ENCODE measurements at regions of chr9 and their contacts with region 1.

Region 1: DNA sequence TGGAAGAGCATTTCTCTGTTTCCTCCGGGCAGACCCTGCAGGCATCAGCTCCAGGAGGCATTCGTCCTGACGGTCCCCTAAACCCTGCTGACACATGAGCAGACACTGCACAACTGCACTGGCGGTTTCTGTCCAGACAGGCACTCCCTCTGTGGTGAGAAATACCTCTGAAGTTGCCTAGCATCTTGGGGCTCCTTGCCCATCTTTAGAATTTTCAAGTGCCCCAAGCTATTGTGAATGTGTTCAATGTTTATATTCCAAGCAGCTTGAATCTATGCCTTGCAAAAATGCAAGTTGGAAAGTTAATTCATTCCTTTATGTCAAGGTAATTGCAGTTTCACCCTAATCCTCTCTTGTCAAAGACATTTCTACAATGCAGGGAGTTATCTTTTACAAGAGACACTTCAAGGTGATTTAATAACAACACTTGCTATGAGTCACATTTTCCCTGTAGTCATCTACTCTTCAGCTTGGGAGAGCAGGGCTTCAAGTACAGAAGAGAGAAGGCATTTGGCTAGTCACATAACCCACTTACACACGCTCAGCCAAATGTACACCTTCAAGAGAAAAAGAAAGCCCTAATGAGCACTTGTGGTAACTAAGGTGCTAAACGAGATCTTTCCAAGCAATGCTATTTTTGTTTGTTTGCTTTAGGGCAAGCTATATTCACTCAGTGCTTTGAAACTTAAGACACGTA is 302.5 kb downstream of the MLLT3 start:
- DNase-seq: peak; percentile 48
- H3K4me3 Mint-ChIP-seq: no peak overlapping the region
- H3K27ac Mint-ChIP-seq: peak overlapping the region; percentile 86
- H3K4me1 Mint-ChIP-seq: peaks cover 98% of the 10 kb centered on the region
- H3K27me3 Mint-ChIP-seq: no peaks in the 10 kb centered on the region

Region 2: GRCh38 chr9:19517202-19517942 is 802.4 kb before region 1 on chr9:
- CTCF ChIA-PET with region 1: interaction called, 3 read pairs
- intact Hi-C with region 1: loop called (anchors 2 kb)
- DNase-seq: peak; percentile 21
- H3K4me3 Mint-ChIP-seq: no peak overlapping the region
- H3K27ac Mint-ChIP-seq: peak overlapping the region; percentile 15
- H3K4me1 Mint-ChIP-seq: peaks cover 31% of the 10 kb centered on the region
- H3K27me3 Mint-ChIP-seq: peaks cover 11% of the 10 kb centered on the region

Region 3: GRCh38 chr9:20209391-20210340 is 110.1 kb before region 1 on chr9:
- CTCF ChIA-PET with region 1: interaction called, 3 read pairs
- intact Hi-C with region 1: loop called (anchors 1 kb)
- DNase-seq: peak; percentile 56
- H3K4me3 Mint-ChIP-seq: no peak overlapping the region
- H3K27ac Mint-ChIP-seq: peak overlapping the region; percentile 70
- H3K4me1 Mint-ChIP-seq: peaks cover 31% of the 10 kb centered on the region
- H3K27me3 Mint-ChIP-seq: no peaks in the 10 kb centered on the region

Region 4: GRCh38 chr9:20302197-20302596 is 17.6 kb before region 1 on chr9:
- CTCF ChIA-PET with region 1: no interaction called
- intact Hi-C with region 1: loop called (anchors 1 kb)
- DNase-seq: no peak
- H3K4me3 Mint-ChIP-seq: no peak overlapping the region
- H3K27ac Mint-ChIP-seq: no peak overlapping the region
- H3K4me1 Mint-ChIP-seq: peaks cover 30% of the 10 kb centered on the region
- H3K27me3 Mint-ChIP-seq: no peaks in the 10 kb centered on the region

Region 5: DNA sequence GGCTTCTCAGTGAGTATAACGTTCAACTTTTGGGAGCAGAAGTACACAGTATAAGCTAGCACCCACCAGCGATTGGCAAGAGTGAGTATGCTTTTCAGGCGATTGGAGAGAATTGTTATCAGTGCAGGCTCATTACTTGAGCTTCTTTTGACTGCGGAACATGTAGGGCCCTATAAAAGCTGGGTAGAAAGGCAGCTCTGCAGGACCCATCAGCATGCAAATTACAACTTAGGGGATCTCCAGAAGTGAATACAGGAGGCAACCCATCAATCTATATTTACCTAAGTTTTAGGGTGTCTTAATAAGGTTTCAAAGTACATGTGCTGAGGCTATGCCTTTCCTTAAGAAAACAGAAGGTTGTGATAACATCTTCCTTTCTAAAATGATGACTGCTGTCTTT is 77.6 kb after region 1 on chr9:
- CTCF ChIA-PET with region 1: no interaction called
- intact Hi-C with region 1: loop called (anchors 2 kb)
- DNase-seq: no peak
- H3K4me3 Mint-ChIP-seq: no peak overlapping the region
- H3K27ac Mint-ChIP-seq: peak overlapping the region; percentile 75
- H3K4me1 Mint-ChIP-seq: peaks cover 64% of the 10 kb centered on the region
- H3K27me3 Mint-ChIP-seq: no peaks in the 10 kb centered on the region

Region 6: DNA sequence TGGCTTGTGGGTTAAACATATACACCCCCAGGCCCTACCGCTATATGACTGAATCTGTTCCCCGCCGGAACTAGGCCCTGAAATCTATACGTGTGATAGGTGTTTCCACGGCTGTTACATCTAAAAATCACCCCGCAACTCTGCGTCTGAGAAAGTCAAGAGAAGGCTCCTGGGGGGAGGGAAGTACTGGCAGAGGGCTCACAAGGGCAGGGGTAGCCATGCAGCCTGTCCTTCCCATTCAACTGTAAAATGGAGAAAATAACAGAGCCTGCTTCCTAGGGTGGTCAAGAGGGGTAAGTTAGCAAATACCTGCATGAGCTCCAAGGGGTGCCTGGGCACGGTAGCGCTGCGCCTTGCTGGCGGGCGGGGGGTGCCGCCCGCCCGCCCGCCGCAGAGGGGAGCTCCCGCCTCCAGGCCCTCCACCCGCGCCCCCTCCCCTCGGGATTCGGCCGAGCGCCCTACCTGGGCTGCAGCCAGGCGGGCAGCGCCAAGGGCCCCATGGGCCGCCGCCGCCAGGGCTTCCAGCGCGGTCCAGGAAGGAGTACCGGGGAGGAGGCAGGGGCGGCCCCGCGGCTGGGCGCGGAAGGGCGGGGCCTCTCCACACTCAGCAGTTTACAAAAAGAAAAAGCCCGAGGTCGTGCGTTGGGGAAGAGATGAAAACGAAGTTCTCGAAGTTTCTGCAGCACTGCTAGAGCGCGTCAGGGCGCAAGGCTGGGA is 711.5 kb after region 1 on chr9 and contains the start of gene HACD4:
- CTCF ChIA-PET with region 1: no interaction called
- intact Hi-C with region 1: loop called (anchors 1 kb)
- DNase-seq: peak; percentile 78
- H3K4me3 Mint-ChIP-seq: peak within 1 kb of the TSS; percentile 49
- H3K27ac Mint-ChIP-seq: peak within 1 kb of the TSS; percentile 69
- H3K4me1 Mint-ChIP-seq: peaks cover 25% of the 10 kb centered on the region
- H3K27me3 Mint-ChIP-seq: no peaks in the 10 kb centered on the region
- total RNA-seq, gene HACD4: 1.1 to 1.6 TPM